Endothelial cell of umbilical vein (primary cell): ENCODE measurements at regions of chrX and their contacts with region 1.

Region 1: GRCh38 chrX:110086916-110087484 is 84.1 kb downstream of the TMEM164 start:
- DNase-seq: peak; percentile 71
- H3K4me3 ChIP-seq: peak overlapping the region in 1 of 3 experiments; percentile 9
- H3K27ac ChIP-seq: peak overlapping the region; percentile 96
- H3K4me1 ChIP-seq: peaks cover 41% of the 10 kb centered on the region
- H3K27me3 ChIP-seq: no peaks in the 10 kb centered on the region
- CTCF ChIP-seq: no peak
- POLR2A ChIP-seq: no peak

Region 2: GRCh38 chrX:109952984-109953905 is 133.8 kb before region 1 on chrX:
- CTCF ChIA-PET with region 1: no interaction called
- POLR2A ChIA-PET with region 1: no interaction called
- dilution Hi-C with region 1: no loop called
- intact Hi-C with region 1: loop called (anchors 2 kb)
- DNase-seq: peak; percentile 27
- H3K4me3 ChIP-seq: no peak overlapping the region
- H3K27ac ChIP-seq: peak overlapping the region; percentile 67
- H3K4me1 ChIP-seq: peaks cover 23% of the 10 kb centered on the region
- H3K27me3 ChIP-seq: no peaks in the 10 kb centered on the region
- CTCF ChIP-seq: no peak
- POLR2A ChIP-seq: no peak

Region 3: GRCh38 chrX:110026099-110026844 is 60.7 kb before region 1 on chrX:
- CTCF ChIA-PET with region 1: no interaction called
- POLR2A ChIA-PET with region 1: no interaction called
- dilution Hi-C with region 1: no loop called
- intact Hi-C with region 1: loop called (anchors 1 kb)
- DNase-seq: peak; percentile 84
- H3K4me3 ChIP-seq: no peak overlapping the region
- H3K27ac ChIP-seq: peak overlapping the region; percentile 48
- H3K4me1 ChIP-seq: peaks cover 23% of the 10 kb centered on the region
- H3K27me3 ChIP-seq: no peaks in the 10 kb centered on the region
- CTCF ChIP-seq: no peak
- POLR2A ChIP-seq: no peak

Region 4: GRCh38 chrX:110053453-110053852 is 33.5 kb before region 1 on chrX:
- CTCF ChIA-PET with region 1: no interaction called
- POLR2A ChIA-PET with region 1: no interaction called
- dilution Hi-C with region 1: no loop called
- intact Hi-C with region 1: no loop called
- DNase-seq: no peak
- H3K4me3 ChIP-seq: no peak overlapping the region
- H3K27ac ChIP-seq: no peak overlapping the region
- H3K4me1 ChIP-seq: peaks cover 2% of the 10 kb centered on the region
- H3K27me3 ChIP-seq: no peaks in the 10 kb centered on the region
- CTCF ChIP-seq: no peak
- POLR2A ChIP-seq: no peak